GM12878 (cell line): ENCODE measurements at regions of chr4 and their contacts with region 1.

Region 1: DNA sequence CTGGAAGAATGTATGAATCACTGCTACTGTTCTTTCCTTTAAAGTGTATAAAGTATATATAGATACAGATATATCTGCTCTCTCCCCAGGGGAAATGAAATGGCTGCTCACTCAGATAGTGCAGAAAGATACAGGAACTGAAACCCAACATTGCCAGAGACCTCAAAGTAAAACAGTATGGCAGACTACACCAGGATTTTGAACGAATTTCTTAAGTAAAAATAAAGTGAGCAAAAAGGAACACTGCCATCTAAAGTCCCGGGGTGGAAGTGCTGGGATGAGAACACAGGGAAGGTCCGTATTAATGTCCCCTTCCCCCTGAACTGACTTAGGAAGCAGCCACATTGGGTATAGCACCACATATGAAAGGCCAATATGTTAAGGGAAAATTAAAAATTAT is 93.4 kb downstream of the TMA16 start:
- DNase-seq: peak; percentile 73
- ATAC-seq: peak; percentile 78
- H3K4me3 ChIP-seq: no peak overlapping the region
- H3K27ac ChIP-seq: peak overlapping the region; percentile 25; the same call in 1 of the 2 replicates
- H3K4me1 ChIP-seq: peaks cover 33% of the 10 kb centered on the region
- H3K27me3 ChIP-seq: no peaks in the 10 kb centered on the region
- CTCF ChIP-seq: peak; percentile 28 to 62 (median 46); a peak in 5 of 6 replicates
- EP300 ChIP-seq: peak; percentile 63 to 78; a peak in 3 of 4 replicates
- POLR2A ChIP-seq: no peak
- RAD21 ChIP-seq: peak; percentile 20; the same call in 1 of the 2 replicates

Region 2: GRCh38 chr4:163228648-163229047 is 359.2 kb before region 1 on chr4:
- CTCF ChIA-PET with region 1: no interaction called
- POLR2A ChIA-PET with region 1: no interaction called
- RAD21 ChIA-PET with region 1: no interaction called
- SMC1A ChIA-PET with region 1: no interaction called
- in situ Hi-C with region 1: no loop called
- intact Hi-C with region 1: no loop called
- DNase-seq: no peak
- ATAC-seq: no peak
- H3K4me3 ChIP-seq: no peak overlapping the region
- H3K27ac ChIP-seq: no peak overlapping the region
- H3K4me1 ChIP-seq: no peaks in the 10 kb centered on the region
- H3K27me3 ChIP-seq: no peaks in the 10 kb centered on the region
- CTCF ChIP-seq: no peak
- EP300 ChIP-seq: no peak
- POLR2A ChIP-seq: no peak
- RAD21 ChIP-seq: no peak

Region 3: DNA sequence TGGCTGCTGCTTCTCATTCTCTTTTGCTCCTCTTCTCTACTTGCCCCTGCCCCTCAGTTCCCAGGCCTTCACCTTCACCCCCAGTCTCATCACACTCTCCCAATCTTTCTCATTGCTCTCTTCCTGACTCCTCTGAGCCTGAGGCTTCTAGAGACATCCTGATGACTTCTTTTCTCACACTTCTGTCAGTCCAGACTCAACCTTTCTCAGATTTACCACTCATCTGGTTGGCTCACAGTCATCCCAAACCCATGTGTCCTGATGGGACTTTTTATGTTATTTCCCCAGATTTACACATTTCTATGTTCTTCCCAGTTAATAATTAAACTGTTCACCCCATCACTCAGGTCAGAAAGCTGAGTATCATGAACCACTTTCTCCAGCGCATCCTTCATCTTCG is 25.4 kb before region 1 on chr4:
- CTCF ChIA-PET with region 1: interaction called, 94 read pairs
- POLR2A ChIA-PET with region 1: interaction called, 4 read pairs
- RAD21 ChIA-PET with region 1: interaction called, 19 read pairs
- SMC1A ChIA-PET with region 1: interaction called, 80 read pairs
- in situ Hi-C with region 1: no loop called
- intact Hi-C with region 1: no loop called
- DNase-seq: no peak
- ATAC-seq: peak; percentile 52
- H3K4me3 ChIP-seq: no peak overlapping the region
- H3K27ac ChIP-seq: no peak overlapping the region
- H3K4me1 ChIP-seq: peaks cover 8% of the 10 kb centered on the region; the same call in 1 of the 2 replicates
- H3K27me3 ChIP-seq: no peaks in the 10 kb centered on the region
- CTCF ChIP-seq: no peak
- EP300 ChIP-seq: no peak
- POLR2A ChIP-seq: no peak
- RAD21 ChIP-seq: no peak

Region 4: DNA sequence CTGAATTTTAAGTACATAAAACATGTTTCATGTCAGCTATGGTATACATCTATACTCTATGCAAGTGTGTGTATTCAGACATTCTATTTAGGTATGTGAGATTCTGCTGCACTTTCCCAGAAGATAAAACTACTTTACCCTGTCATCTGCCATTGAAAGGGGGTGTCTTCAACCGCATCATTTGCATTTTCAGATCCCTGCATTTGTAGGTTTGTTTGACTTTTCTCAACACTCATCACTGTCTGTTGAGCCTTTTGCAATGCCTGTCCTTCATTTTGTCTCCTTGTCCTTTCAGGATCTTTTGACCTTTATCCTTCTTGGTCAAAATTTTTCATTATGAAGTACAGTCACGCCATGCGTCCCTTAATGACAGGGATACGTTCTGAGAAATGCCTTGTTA is 10.2 kb after region 1 on chr4:
- CTCF ChIA-PET with region 1: interaction called, 5 read pairs
- POLR2A ChIA-PET with region 1: no interaction called
- RAD21 ChIA-PET with region 1: interaction called, 9 read pairs
- SMC1A ChIA-PET with region 1: interaction called, 12 read pairs
- in situ Hi-C with region 1: no loop called
- intact Hi-C with region 1: no loop called
- DNase-seq: peak; percentile 60
- ATAC-seq: peak; percentile 81
- H3K4me3 ChIP-seq: 0 out of 2 replicates have a peak overlapping the region, but pooled peaks have one; percentile 7
- H3K27ac ChIP-seq: peak overlapping the region; percentile 71
- H3K4me1 ChIP-seq: peaks cover 13% of the 10 kb centered on the region
- H3K27me3 ChIP-seq: no peaks in the 10 kb centered on the region
- CTCF ChIP-seq: no peak
- EP300 ChIP-seq: no peak
- POLR2A ChIP-seq: no peak
- RAD21 ChIP-seq: no peak; the same call in 1 of the 2 replicates

Region 5: GRCh38 chr4:163611784-163612445 is 24.0 kb after region 1 on chr4:
- CTCF ChIA-PET with region 1: interaction called, 4 read pairs
- POLR2A ChIA-PET with region 1: interaction called, 3 read pairs
- RAD21 ChIA-PET with region 1: interaction called, 10 read pairs
- SMC1A ChIA-PET with region 1: interaction called, 52 read pairs
- in situ Hi-C with region 1: no loop called
- intact Hi-C with region 1: no loop called
- DNase-seq: no peak
- ATAC-seq: peak; percentile 83
- H3K4me3 ChIP-seq: no peak overlapping the region
- H3K27ac ChIP-seq: peak overlapping the region; percentile 38
- H3K4me1 ChIP-seq: peaks cover 25% of the 10 kb centered on the region
- H3K27me3 ChIP-seq: no peaks in the 10 kb centered on the region
- CTCF ChIP-seq: no peak
- EP300 ChIP-seq: peak in 1 of 2 experiments; percentile 16; a peak in 1 of 4 replicates
- POLR2A ChIP-seq: no peak
- RAD21 ChIP-seq: no peak

Region 6: GRCh38 chr4:163673848-163674697 is 86.2 kb after region 1 on chr4:
- CTCF ChIA-PET with region 1: interaction called, 26 read pairs
- POLR2A ChIA-PET with region 1: interaction called, 4 read pairs
- RAD21 ChIA-PET with region 1: interaction called, 9 read pairs
- SMC1A ChIA-PET with region 1: interaction called, 219 read pairs
- in situ Hi-C with region 1: no loop called
- intact Hi-C with region 1: no loop called
- DNase-seq: no peak
- ATAC-seq: peak; percentile 90
- H3K4me3 ChIP-seq: no peak overlapping the region; the same call in 1 of the 2 replicates
- H3K27ac ChIP-seq: no peak overlapping the region
- H3K4me1 ChIP-seq: no peaks in the 10 kb centered on the region; the same call in 1 of the 2 replicates
- H3K27me3 ChIP-seq: no peaks in the 10 kb centered on the region
- CTCF ChIP-seq: no peak
- EP300 ChIP-seq: no peak
- POLR2A ChIP-seq: no peak
- RAD21 ChIP-seq: no peak

Region 7: DNA sequence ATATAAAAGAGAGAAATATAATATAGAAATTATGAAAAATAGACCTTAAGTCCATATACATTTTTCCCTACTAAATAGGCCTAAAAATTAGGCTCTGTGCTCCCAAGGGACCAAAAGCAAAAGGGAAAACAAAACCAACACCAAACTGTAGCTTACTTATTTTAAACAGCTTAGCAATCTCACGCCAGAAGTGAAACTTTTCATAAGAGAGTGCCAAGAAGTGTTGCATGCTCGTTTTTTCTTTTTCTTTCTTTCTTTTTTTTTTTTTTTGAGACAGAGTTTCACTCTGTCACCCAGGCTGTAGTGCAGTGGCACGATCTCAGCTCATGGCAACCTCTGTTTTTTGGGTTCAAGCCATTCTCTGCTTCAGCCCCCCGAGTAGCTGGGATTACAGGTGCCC is 157.0 kb after region 1 on chr4:
- CTCF ChIA-PET with region 1: interaction called, 6 read pairs
- POLR2A ChIA-PET with region 1: interaction called, 8 read pairs
- RAD21 ChIA-PET with region 1: interaction called, 17 read pairs
- SMC1A ChIA-PET with region 1: interaction called, 12 read pairs
- in situ Hi-C with region 1: no loop called
- intact Hi-C with region 1: no loop called
- DNase-seq: peak; percentile 57
- ATAC-seq: peak; percentile 94
- H3K4me3 ChIP-seq: 0 out of 2 replicates have a peak overlapping the region, but pooled peaks have one; percentile 5
- H3K27ac ChIP-seq: peak overlapping the region; percentile 57
- H3K4me1 ChIP-seq: peaks cover 10% of the 10 kb centered on the region
- H3K27me3 ChIP-seq: no peaks in the 10 kb centered on the region
- CTCF ChIP-seq: no peak
- EP300 ChIP-seq: peak; percentile 22 to 58; a peak in 2 of 4 replicates
- POLR2A ChIP-seq: no peak
- RAD21 ChIP-seq: no peak